PC-3 (cell line): ENCODE measurements at regions of chr6 and their contacts with region 1.

Region 1: GRCh38 chr6:35688581-35689322 is at the start of gene FKBP5:
- DNase-seq: peak; percentile 91
- ATAC-seq: peak; percentile 93
- H3K4me3 ChIP-seq: peak within 1 kb of the TSS; percentile 90
- H3K27ac ChIP-seq: no peak within 1 kb of the TSS
- H3K4me1 ChIP-seq: peaks cover 7% of the 10 kb centered on the region; the same call in 1 of the 2 replicates
- H3K27me3 ChIP-seq: no peaks in the 10 kb centered on the region
- CTCF ChIP-seq: no peak
- total RNA-seq, gene FKBP5: 11.9 and 12.4 TPM in 2 replicates

Region 2: DNA sequence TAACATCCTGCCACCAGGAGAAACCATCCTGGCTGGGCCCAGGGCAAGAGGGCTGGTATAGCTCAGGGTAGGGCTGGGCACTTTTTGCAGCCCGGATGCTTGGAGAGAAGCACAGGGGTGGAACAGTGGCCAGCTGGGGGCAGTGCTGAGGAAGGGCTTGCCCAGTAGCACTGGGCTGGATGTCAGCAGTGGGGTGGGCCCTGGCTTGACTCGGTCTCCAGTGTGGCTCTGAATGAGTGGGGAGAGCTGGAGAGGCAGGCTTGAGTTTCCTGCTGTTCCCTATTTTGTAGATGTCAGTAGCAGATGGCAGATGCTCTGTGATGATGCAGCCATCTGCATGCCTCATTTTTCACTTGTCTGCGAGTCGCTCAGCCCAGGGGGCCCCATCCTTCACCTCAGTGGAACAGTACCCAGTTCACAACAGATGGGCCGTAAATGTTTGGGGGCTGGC is 119.7 kb before region 1 on chr6:
- CTCF ChIA-PET with region 1: no interaction called
- POLR2A ChIA-PET with region 1: no interaction called
- intact Hi-C with region 1: no loop called
- DNase-seq: peak; percentile 28
- ATAC-seq: peak; percentile 35; the same call in 1 of the 2 replicates
- H3K4me3 ChIP-seq: no peak overlapping the region
- H3K27ac ChIP-seq: no peak overlapping the region
- H3K4me1 ChIP-seq: no peaks in the 10 kb centered on the region
- H3K27me3 ChIP-seq: peaks cover 12% of the 10 kb centered on the region
- CTCF ChIP-seq: peak; percentile 59

Region 3: DNA sequence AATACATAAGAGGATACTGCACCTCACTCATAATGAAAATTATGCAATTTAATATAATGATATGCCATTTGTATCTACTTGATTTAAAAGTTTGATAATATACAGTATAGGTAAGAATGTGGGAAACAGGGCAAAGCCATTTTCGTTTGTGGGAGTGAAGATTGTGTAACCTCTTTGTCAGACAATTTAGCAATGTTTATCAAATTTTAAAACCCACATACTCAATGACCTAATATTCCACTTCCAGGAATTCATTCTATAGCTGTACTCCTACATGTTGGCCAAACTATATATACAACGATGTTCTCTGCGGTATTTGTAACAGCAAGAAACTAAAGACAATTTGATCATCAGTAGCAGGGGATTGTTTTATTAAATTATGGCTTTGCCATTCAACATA is 17.7 kb after region 1 on chr6:
- CTCF ChIA-PET with region 1: no interaction called
- POLR2A ChIA-PET with region 1: no interaction called
- intact Hi-C with region 1: no loop called
- DNase-seq: no peak
- ATAC-seq: no peak
- H3K4me3 ChIP-seq: no peak overlapping the region
- H3K27ac ChIP-seq: no peak overlapping the region
- H3K4me1 ChIP-seq: no peaks in the 10 kb centered on the region
- H3K27me3 ChIP-seq: no peaks in the 10 kb centered on the region
- CTCF ChIP-seq: no peak

Region 4: DNA sequence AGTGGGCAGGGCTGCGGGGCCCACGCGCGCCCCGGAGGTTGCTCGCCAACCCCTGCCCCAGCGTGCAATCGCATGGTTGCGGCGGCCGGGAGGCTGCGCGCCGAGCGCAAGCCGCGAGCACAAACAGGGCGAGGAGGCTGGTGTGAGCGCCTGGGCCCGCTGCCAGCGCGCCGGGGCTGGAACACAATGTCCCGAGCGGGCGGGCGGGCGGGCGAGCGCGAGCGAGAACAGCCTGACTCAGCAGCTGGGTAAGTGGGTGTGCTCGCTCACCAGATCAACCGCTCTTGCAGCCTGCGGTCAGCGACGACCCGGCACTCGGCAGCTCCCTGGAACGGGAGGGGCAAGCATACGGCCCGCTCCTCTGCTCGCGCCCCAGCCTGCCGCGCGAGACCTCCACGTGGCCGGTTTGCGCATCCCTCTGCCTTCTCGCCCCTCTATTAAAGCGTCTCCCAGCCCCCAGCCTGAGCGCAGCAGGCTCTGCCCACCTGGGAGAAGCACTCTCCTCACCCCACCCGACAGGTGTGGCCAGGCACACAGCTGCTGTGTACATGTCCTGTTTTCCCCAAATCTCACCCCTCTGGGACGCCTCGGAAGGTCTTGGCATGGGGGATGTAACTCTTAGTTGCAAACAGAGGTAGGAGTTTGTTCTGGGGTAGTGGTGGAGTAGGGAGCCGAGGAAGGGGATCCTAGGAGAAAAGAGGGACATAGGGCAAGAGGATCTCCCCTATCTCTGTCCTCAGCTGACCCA is 39.4 kb after region 1 on chr6:
- CTCF ChIA-PET with region 1: interaction called, 4 read pairs
- POLR2A ChIA-PET with region 1: no interaction called
- intact Hi-C with region 1: loop called (anchors 2 kb)
- DNase-seq: peak; percentile 87
- ATAC-seq: peak; percentile 51
- H3K4me3 ChIP-seq: peak overlapping the region; percentile 77
- H3K27ac ChIP-seq: no peak overlapping the region
- H3K4me1 ChIP-seq: peaks cover 27% of the 10 kb centered on the region
- H3K27me3 ChIP-seq: no peaks in the 10 kb centered on the region
- CTCF ChIP-seq: no peak

Region 5: DNA sequence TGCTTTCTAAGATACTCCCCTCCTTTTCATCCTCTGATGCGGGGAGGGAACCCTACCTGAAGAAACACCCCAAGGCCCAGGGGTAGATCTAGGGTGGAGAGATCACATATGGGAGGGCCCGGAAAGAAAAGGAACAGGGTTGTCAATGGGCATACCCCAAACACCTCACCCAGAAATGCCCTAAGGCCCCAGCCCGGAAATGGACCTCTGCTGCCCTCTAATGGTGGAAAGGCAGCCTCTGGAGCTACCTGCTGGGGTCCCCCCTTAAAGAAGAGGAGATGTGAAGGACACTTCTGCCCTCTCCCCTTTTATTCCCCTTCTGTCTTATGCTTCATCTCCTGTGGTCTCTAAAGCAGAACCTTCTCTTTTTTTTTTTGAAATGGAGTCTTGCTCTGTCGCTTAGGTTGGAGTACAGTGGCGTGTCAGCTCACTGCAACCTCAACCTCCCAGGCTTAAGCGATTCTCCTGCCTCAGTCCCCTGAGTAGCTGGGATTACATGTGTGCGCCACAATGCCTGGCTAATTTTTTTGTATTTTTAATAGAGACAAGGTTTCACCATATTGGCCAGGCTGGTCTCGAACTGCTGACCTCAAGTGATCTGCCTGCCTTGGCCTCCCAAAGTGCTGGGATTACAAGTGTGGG is 47.6 kb after region 1 on chr6:
- CTCF ChIA-PET with region 1: interaction called, 6 read pairs
- POLR2A ChIA-PET with region 1: no interaction called
- intact Hi-C with region 1: loop called (anchors 2 kb)
- DNase-seq: peak; percentile 81
- ATAC-seq: peak; percentile 14; the same call in 1 of the 2 replicates
- H3K4me3 ChIP-seq: no peak overlapping the region
- H3K27ac ChIP-seq: no peak overlapping the region
- H3K4me1 ChIP-seq: peaks cover 7% of the 10 kb centered on the region
- H3K27me3 ChIP-seq: no peaks in the 10 kb centered on the region
- CTCF ChIP-seq: peak; percentile 93

Region 6: GRCh38 chr6:35757456-35758123 is 68.8 kb after region 1 on chr6:
- CTCF ChIA-PET with region 1: no interaction called
- POLR2A ChIA-PET with region 1: no interaction called
- intact Hi-C with region 1: no loop called
- DNase-seq: peak; percentile 38
- ATAC-seq: no peak
- H3K4me3 ChIP-seq: no peak overlapping the region
- H3K27ac ChIP-seq: no peak overlapping the region
- H3K4me1 ChIP-seq: peaks cover 6% of the 10 kb centered on the region; the same call in 1 of the 2 replicates
- H3K27me3 ChIP-seq: 0 out of 2 replicates have a peak, but pooled peaks cover 4% of the 10 kb centered on the region
- CTCF ChIP-seq: peak; percentile 47

Region 7: DNA sequence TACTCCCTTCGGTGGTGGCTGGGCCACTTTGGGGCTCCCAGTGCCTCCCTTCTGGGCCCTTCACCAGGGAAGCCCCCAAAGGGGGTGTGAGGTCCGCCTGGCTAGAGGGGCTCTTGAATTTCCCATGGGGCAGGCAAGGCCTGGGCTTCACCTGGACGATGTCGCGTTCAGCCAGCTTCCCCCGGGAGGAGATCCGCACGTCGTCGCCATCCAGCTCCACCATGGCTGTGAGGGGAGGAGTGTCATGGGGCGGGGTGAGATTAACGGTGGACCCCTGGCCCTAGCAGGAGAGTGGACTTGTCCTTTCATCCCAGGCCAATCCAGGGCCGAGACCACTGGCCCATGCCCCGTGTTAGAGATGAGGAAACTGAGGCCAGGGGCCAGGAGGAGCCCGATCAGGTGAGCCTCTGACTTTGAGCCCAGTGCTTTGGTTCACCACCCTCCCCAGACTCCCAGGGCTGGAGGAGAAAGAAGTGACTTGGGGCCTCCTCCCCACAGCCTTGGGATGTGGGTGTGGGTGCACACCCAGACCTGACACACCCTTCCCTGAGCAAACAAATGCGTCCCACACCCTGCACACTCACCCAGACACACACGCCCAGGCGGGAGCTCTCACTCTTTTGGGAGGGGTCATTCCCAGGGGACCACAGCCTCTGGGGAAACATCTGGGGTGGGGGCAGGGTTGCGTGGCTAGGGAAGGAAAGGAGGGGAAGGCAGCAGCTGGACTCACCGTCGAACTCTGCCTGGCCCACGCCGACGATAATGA is 1055.0 kb after region 1 on chr6:
- CTCF ChIA-PET with region 1: no interaction called
- POLR2A ChIA-PET with region 1: no interaction called
- intact Hi-C with region 1: no loop called
- DNase-seq: peak; percentile 41
- ATAC-seq: peak; percentile 92
- H3K4me3 ChIP-seq: no peak overlapping the region
- H3K27ac ChIP-seq: peak overlapping the region; percentile 19
- H3K4me1 ChIP-seq: peaks cover 25% of the 10 kb centered on the region
- H3K27me3 ChIP-seq: no peaks in the 10 kb centered on the region
- CTCF ChIP-seq: no peak